Right cardiac atrium (tissue), 5 donors: ENCODE measurements at regions of chr5 and their contacts with region 1.

Region 1: DNA sequence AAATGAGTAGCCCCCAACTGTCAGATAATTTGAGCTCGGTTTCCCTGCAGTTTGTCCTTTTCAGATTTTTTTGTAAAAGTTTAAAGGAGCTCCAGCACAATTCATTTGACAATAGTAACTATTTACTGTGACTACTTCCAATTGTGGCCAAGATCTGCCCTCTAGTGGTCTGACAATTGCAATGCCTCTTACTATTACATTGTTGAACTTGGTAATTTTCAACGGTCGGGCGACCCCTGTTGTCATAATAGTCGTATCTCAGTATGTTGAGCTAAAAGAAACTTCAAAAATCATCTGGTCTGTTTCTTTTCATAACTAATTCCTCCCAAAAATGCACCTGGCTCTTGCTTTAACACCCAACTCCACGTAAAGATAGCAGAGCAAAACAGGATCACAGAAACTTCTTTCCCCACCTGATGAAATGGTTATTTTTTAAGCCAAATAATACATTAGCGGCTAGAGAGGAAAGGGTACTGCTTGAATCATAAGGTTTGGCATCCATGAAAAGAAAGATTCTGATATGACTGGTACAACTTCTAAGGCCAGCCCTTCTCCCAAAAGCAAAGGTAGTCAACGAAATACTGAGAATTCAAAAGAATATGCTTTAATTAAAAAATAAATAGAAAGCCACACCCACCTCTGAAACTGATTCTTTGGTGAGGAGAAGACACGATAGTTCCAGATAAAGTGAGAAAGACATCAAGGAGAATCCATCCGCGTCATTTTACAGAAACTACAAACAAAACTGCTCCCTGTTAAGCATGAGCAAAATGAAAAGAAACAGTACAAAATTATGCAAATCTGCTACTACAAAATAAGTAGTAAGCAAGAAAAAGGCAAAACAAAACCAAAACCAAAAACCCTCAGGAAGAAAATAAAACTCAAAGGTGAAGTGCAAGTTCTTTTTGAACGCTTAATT is 76.9 kb upstream of the HTR4 start:
- DNase-seq: peak; percentile 66 to 87 (median 77)
- ATAC-seq: peak; percentile 87 to 88
- H3K4me3 ChIP-seq: peak overlapping the region; percentile 27
- H3K27ac ChIP-seq: no peak overlapping the region
- H3K4me1 ChIP-seq: no peaks in the 10 kb centered on the region
- H3K27me3 ChIP-seq: no peaks in the 10 kb centered on the region

Region 2: DNA sequence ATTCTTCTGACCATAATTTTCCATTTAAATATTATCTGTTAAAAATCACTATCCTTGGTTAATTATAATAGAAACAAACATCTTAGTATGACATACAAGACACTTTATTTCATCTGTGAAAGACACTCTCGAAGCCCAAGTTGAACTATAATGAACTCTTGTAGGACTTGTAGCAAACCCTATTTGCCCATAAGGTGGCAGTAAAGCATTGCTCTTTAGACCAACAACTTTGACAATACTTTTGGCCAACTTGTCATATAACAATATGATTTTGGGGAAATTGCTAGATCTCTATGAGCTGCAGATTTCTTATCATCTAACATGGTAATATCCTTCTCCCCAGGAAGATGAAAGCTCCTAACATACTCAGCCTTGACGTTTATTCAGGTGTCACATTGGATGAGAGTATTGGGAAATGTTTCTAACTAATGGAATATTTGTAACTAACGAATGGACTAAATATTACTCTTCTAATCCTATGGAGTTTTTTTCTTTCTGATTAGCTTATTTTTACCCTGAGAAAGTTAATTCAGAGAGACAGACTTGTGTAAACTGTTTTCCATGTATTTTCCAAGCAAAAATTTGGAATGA is 551.9 kb before region 1 on chr5:
- intact Hi-C with region 1: loop called (anchors 2 to 5 kb)
- DNase-seq: no peak
- ATAC-seq: peak; percentile 62 to 74
- H3K4me3 ChIP-seq: no peak overlapping the region
- H3K27ac ChIP-seq: no peak overlapping the region
- H3K4me1 ChIP-seq: no peaks in the 10 kb centered on the region
- H3K27me3 ChIP-seq: no peaks in the 10 kb centered on the region

Region 3: GRCh38 chr5:148290271-148291195 is 440.7 kb before region 1 on chr5:
- intact Hi-C with region 1: loop called in 2 of 4 experiments (anchors 5 to 10 kb)
- DNase-seq: no peak
- ATAC-seq: peak; percentile 51 to 52
- H3K4me3 ChIP-seq: no peak overlapping the region
- H3K27ac ChIP-seq: no peak overlapping the region
- H3K4me1 ChIP-seq: no peaks in the 10 kb centered on the region
- H3K27me3 ChIP-seq: no peaks in the 10 kb centered on the region

Region 4: DNA sequence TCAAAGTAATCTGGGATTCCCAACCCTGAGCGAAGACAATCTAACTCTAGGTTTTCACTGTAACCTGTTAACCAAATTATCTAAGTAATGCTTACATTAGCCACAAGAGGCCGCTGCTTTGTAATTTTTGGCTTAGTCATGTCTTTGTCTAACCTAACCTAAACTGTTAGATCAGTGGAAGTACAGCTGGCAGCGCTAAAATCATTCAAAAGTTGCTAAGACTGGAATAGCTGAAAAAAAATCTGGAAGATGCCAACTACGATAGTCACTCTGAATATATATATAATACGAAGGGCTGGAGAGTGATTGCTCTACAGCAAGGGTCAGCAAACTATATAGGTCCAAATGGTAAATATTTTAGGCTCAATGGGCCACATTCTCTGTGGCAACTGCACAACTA is 287.2 kb before region 1 on chr5:
- intact Hi-C with region 1: loop called (anchors 2 to 5 kb)
- DNase-seq: no peak
- ATAC-seq: peak; percentile 77 to 84
- H3K4me3 ChIP-seq: no peak overlapping the region
- H3K27ac ChIP-seq: no peak overlapping the region
- H3K4me1 ChIP-seq: peaks cover 2% of the 10 kb centered on the region
- H3K27me3 ChIP-seq: no peaks in the 10 kb centered on the region

Region 5: GRCh38 chr5:148554621-148555020 is 176.6 kb before region 1 on chr5:
- intact Hi-C with region 1: no loop called
- DNase-seq: no peak
- ATAC-seq: no peak
- H3K4me3 ChIP-seq: no peak overlapping the region
- H3K27ac ChIP-seq: no peak overlapping the region
- H3K4me1 ChIP-seq: no peaks in the 10 kb centered on the region
- H3K27me3 ChIP-seq: no peaks in the 10 kb centered on the region

Region 6: GRCh38 chr5:148957591-148958202 is 226.5 kb after region 1 on chr5:
- intact Hi-C with region 1: loop called in 1 of 4 experiments (anchors 10 kb)
- DNase-seq: peak in 2 of 3 donors; percentile 24 to 60
- ATAC-seq: peak in 1 of 2 donors; percentile 27
- H3K4me3 ChIP-seq: no peak overlapping the region
- H3K27ac ChIP-seq: no peak overlapping the region
- H3K4me1 ChIP-seq: no peaks in the 10 kb centered on the region
- H3K27me3 ChIP-seq: no peaks in the 10 kb centered on the region

Region 7: GRCh38 chr5:148972958-148973357 is 241.8 kb after region 1 on chr5:
- intact Hi-C with region 1: no loop called
- DNase-seq: peak in 2 of 3 donors; percentile 65 to 66
- ATAC-seq: peak; percentile 83 to 94
- H3K4me3 ChIP-seq: no peak overlapping the region
- H3K27ac ChIP-seq: peak overlapping the region; percentile 70
- H3K4me1 ChIP-seq: peaks cover 15% of the 10 kb centered on the region
- H3K27me3 ChIP-seq: no peaks in the 10 kb centered on the region

Region 8: DNA sequence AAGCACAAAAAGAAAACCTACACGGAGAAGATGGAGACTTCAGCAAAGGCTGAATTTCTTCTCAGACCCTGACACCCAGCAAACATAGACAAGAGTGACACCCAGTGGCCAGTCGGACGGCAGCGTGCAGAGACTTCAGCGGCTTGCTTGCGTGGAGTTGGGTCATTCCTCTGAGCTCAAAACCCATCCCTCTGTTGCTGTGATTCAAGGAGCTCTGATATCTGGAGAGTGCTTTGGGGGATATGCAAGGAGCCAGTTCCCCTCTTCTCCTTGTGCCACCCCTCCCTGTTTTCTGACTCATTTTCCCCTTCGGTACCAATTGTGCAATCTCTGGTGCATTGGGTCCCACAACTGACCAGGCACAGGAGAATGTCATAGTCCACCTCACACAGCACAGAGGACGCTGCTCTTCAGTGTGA is 304.2 kb after region 1 on chr5:
- intact Hi-C with region 1: loop called (anchors 2 to 10 kb)
- DNase-seq: peak; percentile 72 to 89 (median 84)
- ATAC-seq: peak; percentile 89 to 90
- H3K4me3 ChIP-seq: no peak overlapping the region
- H3K27ac ChIP-seq: no peak overlapping the region
- H3K4me1 ChIP-seq: no peaks in the 10 kb centered on the region
- H3K27me3 ChIP-seq: no peaks in the 10 kb centered on the region

Region 9: GRCh38 chr5:149114403-149115312 is 383.5 kb after region 1 on chr5:
- intact Hi-C with region 1: loop called (anchors 2 to 5 kb)
- DNase-seq: peak; percentile 42 to 69 (median 66)
- ATAC-seq: peak; percentile 97
- H3K4me3 ChIP-seq: no peak overlapping the region
- H3K27ac ChIP-seq: no peak overlapping the region
- H3K4me1 ChIP-seq: peaks cover 3% of the 10 kb centered on the region
- H3K27me3 ChIP-seq: no peaks in the 10 kb centered on the region